ENCODE measurements at regions of chr5 and their contacts with region 1.

Region 1: DNA sequence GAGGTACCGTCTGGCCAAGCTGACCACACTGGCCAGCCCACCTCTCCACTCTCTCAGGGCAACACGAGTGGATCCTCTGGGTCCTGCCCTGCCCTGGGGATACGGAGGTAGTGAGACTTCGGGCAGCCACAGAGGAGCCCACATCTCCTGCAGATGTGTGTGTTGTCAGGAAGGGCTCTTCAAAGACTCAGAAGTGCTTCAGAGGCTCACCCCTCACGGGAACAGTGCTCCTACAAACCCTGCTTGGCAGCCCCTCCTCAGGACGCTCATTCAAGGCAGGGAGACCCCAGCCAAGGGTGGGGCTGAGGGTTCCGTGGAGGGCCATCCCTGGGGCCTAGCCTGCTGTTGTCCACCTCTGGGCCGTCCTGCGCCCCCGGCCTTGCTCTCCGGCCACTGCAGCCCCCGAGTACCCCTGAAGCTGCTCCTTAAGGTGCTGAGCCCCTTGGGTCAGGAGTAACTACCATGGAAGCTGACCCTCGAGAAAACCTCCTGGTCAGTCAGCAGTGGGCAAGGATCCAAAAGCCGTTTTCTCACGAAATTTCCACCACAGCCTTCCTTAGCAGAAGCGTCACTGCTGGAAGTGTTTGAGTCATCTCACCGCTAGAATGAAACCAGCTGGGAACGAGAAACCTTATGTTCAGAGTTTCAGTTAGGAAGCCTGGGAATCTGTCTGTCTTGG is 23.2 kb upstream of the LRRC14B start:
- DNase-seq: peak; percentile 96
- H3K4me3 ChIP-seq: no peak overlapping the region
- H3K27ac ChIP-seq: peak overlapping the region; percentile 92
- H3K27me3 ChIP-seq: no peaks in the 10 kb centered on the region
- CTCF ChIP-seq: no peak

Region 2: DNA sequence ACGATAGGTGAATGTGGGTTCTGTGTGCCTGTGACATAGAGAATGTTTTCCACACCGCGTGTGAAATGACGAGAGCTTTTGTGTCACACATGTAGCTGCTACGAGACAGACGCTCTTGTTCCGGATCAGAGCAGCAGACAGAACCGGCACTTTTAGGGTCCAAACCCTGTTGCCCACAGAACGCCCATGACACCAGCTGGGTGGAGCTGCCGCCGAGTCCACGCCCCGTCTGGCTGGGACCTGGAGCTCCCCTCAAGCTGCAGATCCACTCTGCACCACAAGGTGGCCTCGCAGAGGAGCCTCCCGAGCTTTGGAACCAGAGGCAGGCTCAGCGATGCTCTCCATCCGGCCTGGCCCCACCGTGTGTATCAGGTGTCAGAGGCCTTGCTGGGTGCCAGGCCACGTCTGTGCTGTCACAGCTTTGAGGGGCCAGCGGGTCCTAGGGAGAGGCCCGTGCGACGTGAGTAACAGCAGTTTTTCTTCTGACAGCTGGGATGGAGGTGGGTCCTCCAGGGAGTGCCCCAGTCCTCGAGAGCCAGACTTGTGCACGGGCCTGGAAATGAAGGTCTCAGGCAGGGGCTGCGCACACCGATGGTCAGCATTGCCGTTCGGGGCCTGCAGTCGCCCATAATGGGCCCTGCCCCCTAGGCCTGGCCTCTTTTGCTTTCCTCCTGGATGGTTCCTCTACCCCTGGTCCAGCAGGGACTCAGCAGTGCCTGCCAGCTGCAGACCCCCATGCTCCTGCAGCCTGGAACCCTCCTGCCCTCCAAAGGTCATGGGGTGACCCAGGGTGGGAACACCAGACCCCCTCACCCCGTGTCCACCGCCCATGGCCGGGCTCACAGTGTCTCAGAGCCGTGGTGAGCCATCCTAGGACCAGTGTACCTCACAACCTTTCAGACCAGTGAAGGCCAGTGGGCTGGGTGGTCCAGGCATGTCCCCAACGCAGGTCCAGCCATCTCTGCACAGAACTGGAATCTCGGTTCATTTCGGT is 20.7 kb after region 1 on chr5:
- CTCF ChIA-PET with region 1: interaction called, 13 read pairs
- POLR2A ChIA-PET with region 1: no interaction called
- DNase-seq: peak; percentile 46
- H3K4me3 ChIP-seq: 0 out of 2 replicates have a peak overlapping the region, but pooled peaks have one; percentile 12
- H3K27ac ChIP-seq: no peak overlapping the region
- H3K27me3 ChIP-seq: peaks cover 14% of the 10 kb centered on the region
- CTCF ChIP-seq: peak; percentile 90